ENCODE measurements at regions of chr20 and their contacts with region 1.

Region 1: GRCh38 chr20:46520976-46521579 is 7.7 kb upstream of the ZNF334 start:
- DNase-seq: peak; percentile 33 to 64 (median 42)
- ATAC-seq: peak; percentile 80
- H3K4me3 ChIP-seq: no peak overlapping the region
- H3K27ac ChIP-seq: no peak overlapping the region
- H3K4me1 ChIP-seq: no peaks in the 10 kb centered on the region
- H3K27me3 ChIP-seq: no peaks in the 10 kb centered on the region; a peak in 1 of 5 replicates
- CTCF ChIP-seq: peak; percentile 59 to 69 (median 67)
- EP300 ChIP-seq: no peak
- POLR2A ChIP-seq: no peak
- RAD21 ChIP-seq: peak; percentile 25 to 80; a peak in 3 of 4 replicates

Region 2: DNA sequence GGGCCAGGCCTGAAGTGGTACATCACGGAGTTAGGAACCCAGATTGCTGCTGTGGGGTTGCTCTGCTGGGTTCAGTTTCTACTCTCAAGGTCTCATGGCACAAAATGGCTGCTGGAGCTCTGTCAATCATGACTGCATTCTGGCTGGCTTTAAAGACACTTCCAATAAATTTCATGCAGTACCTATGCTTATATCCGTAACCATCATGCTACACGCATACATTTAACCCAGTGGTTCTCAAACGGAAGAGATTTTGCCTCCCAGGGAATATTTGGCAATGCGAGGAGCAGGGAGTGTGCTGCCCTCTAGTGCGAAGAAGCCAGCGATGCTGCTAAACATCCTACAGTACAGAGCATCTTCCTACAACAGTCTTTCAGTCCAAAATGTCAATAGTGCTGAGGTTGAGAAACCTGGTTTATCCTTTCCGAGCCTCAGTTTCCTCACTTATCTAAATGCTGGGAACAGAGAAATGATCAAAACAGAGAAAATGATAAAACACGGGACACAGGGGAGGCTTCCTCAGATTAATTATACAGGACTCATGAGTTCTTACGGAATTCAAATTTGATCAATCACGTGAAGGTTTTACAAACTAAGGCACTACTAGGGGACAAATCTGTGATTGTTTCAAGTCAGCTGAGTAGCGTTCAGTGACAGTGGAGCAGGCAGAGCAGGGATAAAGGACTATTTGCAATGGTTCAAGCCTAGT is 178.7 kb after region 1 on chr20:
- CTCF ChIA-PET with region 1: no interaction called
- POLR2A ChIA-PET with region 1: no interaction called
- in situ Hi-C with region 1: no loop called
- intact Hi-C with region 1: loop called (anchors 5 kb)
- DNase-seq: peak; percentile 42 to 68 (median 48)
- ATAC-seq: peak; percentile 93
- H3K4me3 ChIP-seq: no peak overlapping the region
- H3K27ac ChIP-seq: no peak overlapping the region
- H3K4me1 ChIP-seq: 0 out of 5 replicates have a peak, but pooled peaks cover 0 to 5% of the 10 kb centered on the region in 2 experiments
- H3K27me3 ChIP-seq: no peaks in the 10 kb centered on the region
- CTCF ChIP-seq: peak; percentile 77 to 82 (median 81)
- EP300 ChIP-seq: no peak
- POLR2A ChIP-seq: no peak
- RAD21 ChIP-seq: peak; percentile 45 to 79

Measured in K562 (cell line).